ENCODE measurements at regions of chr1 and their contacts with region 1.

Region 1: GRCh38 chr1:72601035-72601674 is 318.8 kb upstream of the NEGR1 start:
- DNase-seq: no peak
- ATAC-seq: no peak

Region 2: GRCh38 chr1:72616686-72617085 is 15.5 kb after region 1 on chr1:
- intact Hi-C with region 1: loop called (anchors 1 kb)
- DNase-seq: no peak
- ATAC-seq: no peak

Region 3: DNA sequence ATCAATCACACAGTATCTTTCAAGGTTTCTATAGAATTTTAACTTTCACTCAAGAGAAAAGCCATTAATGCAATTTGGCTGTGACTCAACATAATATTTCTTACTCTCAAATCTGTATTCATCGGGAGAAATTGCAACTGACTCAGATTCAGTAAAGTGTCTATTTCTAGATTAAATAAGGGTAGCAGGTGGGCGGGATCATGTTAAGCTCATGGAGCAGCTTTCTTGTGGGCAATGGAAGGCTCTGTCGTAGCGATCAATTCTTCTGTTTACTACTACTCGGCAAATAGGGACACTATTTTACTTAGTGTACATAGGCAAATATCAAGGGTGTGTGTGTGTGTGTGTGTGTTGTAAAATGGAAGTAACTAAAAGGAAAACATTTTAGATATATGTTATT is 104.8 kb after region 1 on chr1:
- intact Hi-C with region 1: no loop called
- DNase-seq: no peak
- ATAC-seq: no peak

Measured in Right ventricle myocardium inferior (tissue), 1 donor.